ENCODE measurements at regions of chr16 and their contacts with region 1.

Region 1: DNA sequence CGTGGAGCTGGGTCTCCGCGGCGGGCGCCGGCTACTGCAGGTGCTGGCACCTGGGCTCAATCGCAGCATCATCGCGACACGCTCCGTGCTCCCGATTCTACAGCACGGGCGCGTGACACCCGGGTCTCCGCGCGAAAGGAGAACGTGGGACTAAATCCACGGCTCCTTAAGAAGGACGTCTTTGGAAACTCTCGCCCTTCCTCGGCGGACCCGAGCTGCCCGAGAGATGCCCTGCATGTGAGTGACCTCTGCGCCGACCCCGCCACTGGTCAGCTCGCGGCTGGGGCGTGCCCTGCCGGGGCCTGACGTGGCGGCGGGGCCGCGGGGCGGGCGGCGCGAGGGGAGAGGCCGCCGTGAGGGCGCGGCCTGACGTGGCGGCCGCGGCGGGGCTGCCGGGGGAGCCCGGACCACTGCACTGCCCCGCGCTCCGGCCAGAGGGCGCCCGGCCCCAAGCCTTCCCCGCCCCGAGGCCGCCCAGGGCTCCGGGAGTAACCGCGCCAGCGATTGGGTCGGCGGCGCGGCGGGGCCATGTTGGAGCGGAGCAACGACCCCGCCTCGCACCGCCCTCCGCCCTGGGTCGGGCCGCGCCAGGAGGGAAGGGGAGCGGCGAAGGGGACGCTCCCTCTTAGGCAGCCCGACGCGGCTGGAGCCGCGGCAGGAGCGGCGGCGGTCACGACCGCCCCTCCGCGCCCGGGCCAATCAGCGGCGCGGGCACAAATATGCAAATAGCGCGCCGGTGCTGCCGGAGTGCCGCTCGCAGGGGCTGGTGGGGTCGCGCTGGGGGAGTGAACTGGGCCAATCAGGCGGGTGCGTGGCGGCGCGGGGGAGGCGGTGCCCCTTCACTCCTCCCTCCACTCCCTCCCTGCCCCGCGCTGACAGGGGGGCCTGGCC is 75.6 kb downstream of the CHD9 start:
- DNase-seq: peak; percentile 95 to 96 (median 96)
- H3K4me3 ChIP-seq: peak overlapping the region; percentile 36 to 64
- H3K4me3 Mint-ChIP-seq: peak overlapping the region; percentile 74 to 91 (median 84)
- H3K27ac ChIP-seq: peak overlapping the region; percentile 55
- H3K27ac Mint-ChIP-seq: peak overlapping the region; percentile 80 to 96 (median 86)
- H3K4me1 ChIP-seq: peaks cover 8% of the 10 kb centered on the region
- H3K4me1 Mint-ChIP-seq: peaks cover 9 to 19% (median 14%) of the 10 kb centered on the region in 4 donors
- H3K27me3 ChIP-seq: no peaks in the 10 kb centered on the region
- H3K27me3 Mint-ChIP-seq: no peaks in the 10 kb centered on the region

Region 2: DNA sequence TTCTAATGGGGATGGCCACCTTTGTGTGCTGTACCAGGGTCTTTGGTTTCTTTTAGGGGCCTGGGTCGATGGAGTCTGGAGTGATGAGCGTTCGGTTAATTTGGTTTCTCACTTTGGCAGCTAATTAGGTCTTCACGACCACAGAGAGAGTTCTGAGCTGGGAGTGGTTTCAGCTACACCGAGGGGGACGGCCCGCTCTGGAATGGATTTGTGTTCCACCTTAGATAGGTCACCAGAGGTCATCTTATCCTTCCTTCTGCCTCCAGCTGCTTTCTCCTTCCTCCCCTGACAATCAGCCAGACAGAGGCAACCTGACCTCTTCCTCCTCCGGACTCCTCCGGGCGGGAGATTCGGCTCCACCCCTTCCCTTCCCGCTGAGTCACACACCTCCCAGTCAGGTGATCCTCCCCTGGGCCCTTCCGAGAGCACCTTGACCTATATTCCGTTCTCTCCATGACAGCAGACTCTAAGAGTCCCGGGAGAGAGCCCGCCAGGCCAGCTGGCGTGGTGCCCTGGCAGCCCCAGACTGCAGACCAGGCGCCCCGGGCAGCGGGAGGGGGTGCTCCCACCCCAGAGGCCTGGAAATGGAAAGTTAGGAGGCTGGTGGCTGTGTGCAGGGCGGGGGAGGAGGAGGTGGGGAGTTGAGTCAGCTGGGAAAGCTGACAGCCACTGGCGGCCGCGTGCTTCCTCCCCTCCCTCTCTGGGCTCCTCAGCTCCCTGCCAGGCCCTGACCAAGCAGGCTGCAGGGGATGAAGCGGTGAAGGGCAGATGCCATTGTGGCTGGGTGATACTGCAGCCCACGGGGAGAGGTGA is 30.9 kb before region 1 on chr16:
- CTCF ChIA-PET with region 1: interaction called, 9 read pairs
- POLR2A ChIA-PET with region 1: interaction called, 20 read pairs
- intact Hi-C with region 1: loop called (anchors 1 kb)
- DNase-seq: peak; percentile 51 to 82 (median 53)
- H3K4me3 ChIP-seq: peak overlapping the region; percentile 37 to 53
- H3K4me3 Mint-ChIP-seq: peak overlapping the region; percentile 90 to 97 (median 94)
- H3K27ac ChIP-seq: peak overlapping the region; percentile 69
- H3K27ac Mint-ChIP-seq: peak overlapping the region; percentile 88 to 99 (median 94)
- H3K4me1 ChIP-seq: peaks cover 30% of the 10 kb centered on the region
- H3K4me1 Mint-ChIP-seq: peaks cover 19 to 40% (median 28%) of the 10 kb centered on the region in 4 donors
- H3K27me3 ChIP-seq: no peaks in the 10 kb centered on the region
- H3K27me3 Mint-ChIP-seq: no peaks in the 10 kb centered on the region

Region 3: GRCh38 chr16:53207810-53208752 is 77.7 kb after region 1 on chr16:
- CTCF ChIA-PET with region 1: no interaction called
- POLR2A ChIA-PET with region 1: no interaction called
- intact Hi-C with region 1: loop called (anchors 5 kb)
- DNase-seq: peak in 2 of 5 donors; percentile 4 to 5
- H3K4me3 ChIP-seq: no peak overlapping the region
- H3K4me3 Mint-ChIP-seq: peak overlapping the region in 7 of 8 donors; percentile 43 to 66 (median 62)
- H3K27ac ChIP-seq: no peak overlapping the region
- H3K27ac Mint-ChIP-seq: peak overlapping the region in 6 of 7 donors; percentile 33 to 79 (median 69)
- H3K4me1 ChIP-seq: no peaks in the 10 kb centered on the region
- H3K4me1 Mint-ChIP-seq: peaks cover 12 to 18% (median 15%) of the 10 kb centered on the region in 4 donors
- H3K27me3 ChIP-seq: no peaks in the 10 kb centered on the region
- H3K27me3 Mint-ChIP-seq: no peaks in the 10 kb centered on the region

Region 4: DNA sequence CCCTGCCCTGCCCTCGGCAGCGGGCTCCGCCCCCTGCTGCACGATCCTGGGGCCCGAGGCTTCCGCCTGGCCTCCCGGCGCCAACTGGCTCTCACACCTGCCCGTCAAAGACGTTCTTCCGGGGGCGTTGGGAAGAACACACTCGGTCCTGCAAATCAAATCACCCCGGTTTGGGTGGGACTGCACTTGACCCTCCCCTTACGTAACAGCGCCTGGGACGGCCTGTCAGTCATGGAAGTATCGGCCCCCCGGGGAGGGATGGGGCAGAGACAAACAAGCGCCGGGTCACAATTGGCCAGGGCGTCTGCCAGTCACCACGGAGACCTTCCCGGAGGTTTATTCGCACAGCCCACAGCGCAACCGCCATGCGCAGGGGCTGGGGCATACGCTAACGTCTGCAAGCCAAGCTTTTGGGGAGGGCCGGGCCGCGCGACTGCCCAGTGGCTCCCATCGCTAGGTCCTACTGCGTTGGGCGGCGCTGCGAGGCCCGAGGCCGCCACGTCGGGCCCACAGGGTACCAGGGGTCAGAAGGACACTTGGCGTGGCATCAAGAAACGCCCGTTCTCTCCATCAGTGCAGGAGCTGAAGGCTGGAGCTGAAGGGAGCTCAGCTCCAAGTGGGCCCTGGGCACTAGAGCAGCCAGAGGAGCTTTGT is 373.0 kb after region 1 on chr16:
- CTCF ChIA-PET with region 1: no interaction called
- POLR2A ChIA-PET with region 1: no interaction called
- intact Hi-C with region 1: loop called (anchors 1 kb)
- DNase-seq: peak; percentile 99 to 100 (median 100)
- H3K4me3 ChIP-seq: peak overlapping the region; percentile 40 to 83
- H3K4me3 Mint-ChIP-seq: peak overlapping the region; percentile 90 to 95 (median 92)
- H3K27ac ChIP-seq: peak overlapping the region; percentile 76
- H3K27ac Mint-ChIP-seq: peak overlapping the region; percentile 87 to 94 (median 91)
- H3K4me1 ChIP-seq: peaks cover 52% of the 10 kb centered on the region
- H3K4me1 Mint-ChIP-seq: peaks cover 38 to 61% (median 50%) of the 10 kb centered on the region in 4 donors
- H3K27me3 ChIP-seq: no peaks in the 10 kb centered on the region
- H3K27me3 Mint-ChIP-seq: no peaks in the 10 kb centered on the region

Region 5: GRCh38 chr16:53703590-53704444 is 573.4 kb after region 1 on chr16 and contains the starts of genes FTO and RPGRIP1L:
- CTCF ChIA-PET with region 1: no interaction called
- POLR2A ChIA-PET with region 1: no interaction called
- intact Hi-C with region 1: loop called (anchors 2 kb)
- DNase-seq: peak; percentile 95 to 97 (median 96)
- H3K4me3 ChIP-seq: peak within 1 kb of the TSS; percentile 54 to 85
- H3K4me3 Mint-ChIP-seq: peak within 1 kb of the TSS; percentile 96 to 100 (median 98)
- H3K27ac ChIP-seq: peak within 1 kb of the TSS; percentile 59
- H3K27ac Mint-ChIP-seq: peak within 1 kb of the TSS; percentile 90 to 99 (median 97)
- H3K4me1 ChIP-seq: peaks cover 23% of the 10 kb centered on the region
- H3K4me1 Mint-ChIP-seq: peaks cover 22 to 47% (median 36%) of the 10 kb centered on the region in 4 donors
- H3K27me3 ChIP-seq: no peaks in the 10 kb centered on the region
- H3K27me3 Mint-ChIP-seq: no peaks in the 10 kb centered on the region
- total RNA-seq, gene FTO: 61.5 to 68.8 TPM
- total RNA-seq, gene RPGRIP1L: 4.2 to 4.3 TPM

Measured in CD4-positive, alpha-beta memory T cell (primary cell).